CD14-positive monocyte (primary cell): ENCODE measurements at regions of chr5 and their contacts with region 1.

Region 1: DNA sequence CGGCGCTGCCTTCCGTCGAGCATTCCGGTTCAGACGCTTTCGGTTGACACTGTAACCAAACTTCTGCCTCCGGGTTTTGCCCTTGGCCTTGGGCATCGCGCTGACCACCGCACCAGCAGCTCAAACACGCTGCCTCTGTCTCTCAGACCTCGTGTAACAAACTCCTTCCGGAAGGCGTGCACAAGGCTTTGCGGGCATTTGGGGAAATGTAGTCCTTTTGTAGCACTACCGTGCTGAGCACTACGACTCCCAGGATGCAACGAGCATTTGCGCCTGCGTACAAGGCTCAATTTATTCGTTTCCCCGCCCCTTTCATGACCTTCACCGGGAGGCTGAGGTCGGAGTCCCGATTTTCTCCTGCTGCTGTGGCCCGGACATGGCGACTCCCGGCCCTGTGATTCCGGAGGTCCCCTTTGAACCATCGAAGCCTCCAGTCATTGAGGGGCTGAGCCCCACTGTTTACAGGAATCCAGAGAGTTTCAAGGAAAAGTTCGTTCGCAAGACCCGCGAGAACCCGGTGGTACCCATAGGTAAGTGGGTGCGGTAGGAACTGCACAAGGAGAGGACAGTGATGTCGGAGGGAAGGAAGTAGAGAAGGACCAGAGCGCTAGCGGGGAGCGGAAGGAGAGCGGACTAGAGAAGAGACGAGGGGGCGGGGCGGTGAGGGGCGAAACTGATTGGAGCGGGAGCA is at the starts of genes HIGD2A and NOP16:
- DNase-seq: peak; percentile 97 to 99 (median 98)
- H3K4me3 ChIP-seq: peak within 1 kb of the TSS; percentile 66 to 98 (median 73)
- H3K4me3 Mint-ChIP-seq: peak within 1 kb of the TSS; percentile 98 to 99
- H3K27ac ChIP-seq: peak within 1 kb of the TSS; percentile 95 to 96
- H3K27ac Mint-ChIP-seq: peak within 1 kb of the TSS; percentile 98 to 100 (median 100)
- H3K4me1 ChIP-seq: peaks cover 34 to 45% of the 10 kb centered on the region in 2 donors
- H3K4me1 Mint-ChIP-seq: peaks cover 47% of the 10 kb centered on the region
- H3K27me3 ChIP-seq: no peaks in the 10 kb centered on the region
- H3K27me3 Mint-ChIP-seq: peaks cover 0 to 2% (median 0%) of the 10 kb centered on the region in 3 donors
- CTCF ChIP-seq: no peak
- polyA plus RNA-seq, gene HIGD2A: 101 to 298 (median 260) TPM
- polyA plus RNA-seq, gene NOP16: 17.2 to 23.4 (median 17.6) TPM

Region 2: DNA sequence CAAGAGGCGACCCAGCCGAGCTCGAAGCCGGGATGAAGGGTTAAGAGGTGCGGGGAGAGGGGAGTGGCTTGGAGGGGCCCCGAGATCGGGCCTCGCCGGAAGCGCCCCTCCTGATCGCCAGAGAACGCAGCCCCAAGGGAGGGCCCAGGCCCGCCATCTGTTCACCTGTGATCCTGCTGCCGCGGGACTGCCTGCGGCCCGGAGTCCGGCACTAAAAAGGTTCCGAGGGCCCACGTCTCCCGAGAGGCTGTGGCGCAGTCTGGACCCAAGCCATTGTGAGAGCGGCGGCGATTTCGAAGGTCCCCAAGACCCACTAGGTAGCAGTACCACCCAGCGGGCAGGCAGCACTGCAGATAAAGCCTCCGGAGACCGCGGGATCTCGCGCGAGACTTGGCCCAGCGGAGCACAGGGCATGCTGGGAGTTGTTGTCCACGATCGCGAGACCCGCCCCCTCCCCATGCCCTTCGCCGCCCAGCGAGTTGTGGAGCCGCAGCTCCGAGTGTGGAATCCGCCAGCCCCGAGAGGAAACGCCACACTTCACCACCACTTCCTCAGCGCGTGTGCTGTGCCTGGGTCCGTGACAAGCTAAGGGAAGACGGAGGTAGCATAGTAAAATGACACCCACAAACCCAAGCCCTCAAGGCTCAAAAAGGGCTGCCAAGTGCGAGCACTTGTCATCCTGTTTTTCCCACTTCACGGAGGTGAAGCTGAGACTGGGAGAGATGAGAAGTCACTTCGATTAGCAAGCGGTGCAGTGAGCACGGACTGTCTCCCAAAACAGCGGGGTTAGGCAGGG is 27.0 kb before region 1 on chr5 and contains the start of gene KIAA1191:
- intact Hi-C with region 1: loop called in 1 of 2 experiments (anchors 2 kb)
- DNase-seq: peak; percentile 88 to 93 (median 91)
- H3K4me3 ChIP-seq: peak within 1 kb of the TSS; percentile 64 to 96 (median 87)
- H3K4me3 Mint-ChIP-seq: peak within 1 kb of the TSS; percentile 99
- H3K27ac ChIP-seq: peak within 1 kb of the TSS; percentile 7 to 68
- H3K27ac Mint-ChIP-seq: peak within 1 kb of the TSS; percentile 82 to 94 (median 89)
- H3K4me1 ChIP-seq: peaks cover 24 to 45% of the 10 kb centered on the region in 2 donors
- H3K4me1 Mint-ChIP-seq: peaks cover 27% of the 10 kb centered on the region
- H3K27me3 ChIP-seq: peaks cover 15 to 31% of the 10 kb centered on the region in 2 donors
- H3K27me3 Mint-ChIP-seq: peaks cover 23 to 33% (median 28%) of the 10 kb centered on the region in 3 donors
- CTCF ChIP-seq: no peak
- polyA plus RNA-seq, gene KIAA1191: 32.3 to 36.4 (median 32.5) TPM

Region 3: GRCh38 chr5:176447982-176448608 is 59.5 kb after region 1 on chr5 and contains the start of gene FAF2:
- intact Hi-C with region 1: loop called (anchors 2 kb)
- DNase-seq: peak; percentile 95 to 97 (median 96)
- H3K4me3 ChIP-seq: peak within 1 kb of the TSS; percentile 84 to 98 (median 97)
- H3K4me3 Mint-ChIP-seq: peak within 1 kb of the TSS; percentile 95 to 99
- H3K27ac ChIP-seq: peak within 1 kb of the TSS; percentile 99 to 100
- H3K27ac Mint-ChIP-seq: peak within 1 kb of the TSS; percentile 99 to 100 (median 100)
- H3K4me1 ChIP-seq: peaks cover 24 to 25% of the 10 kb centered on the region in 2 donors
- H3K4me1 Mint-ChIP-seq: peaks cover 23% of the 10 kb centered on the region
- H3K27me3 ChIP-seq: no peaks in the 10 kb centered on the region
- H3K27me3 Mint-ChIP-seq: peaks cover 0 to 4% (median 0%) of the 10 kb centered on the region in 3 donors
- CTCF ChIP-seq: peak; percentile 96
- polyA plus RNA-seq, gene FAF2: 11.5 to 14.8 (median 12.2) TPM